ENCODE measurements at regions of chr19 and their contacts with region 1.

Region 1: DNA sequence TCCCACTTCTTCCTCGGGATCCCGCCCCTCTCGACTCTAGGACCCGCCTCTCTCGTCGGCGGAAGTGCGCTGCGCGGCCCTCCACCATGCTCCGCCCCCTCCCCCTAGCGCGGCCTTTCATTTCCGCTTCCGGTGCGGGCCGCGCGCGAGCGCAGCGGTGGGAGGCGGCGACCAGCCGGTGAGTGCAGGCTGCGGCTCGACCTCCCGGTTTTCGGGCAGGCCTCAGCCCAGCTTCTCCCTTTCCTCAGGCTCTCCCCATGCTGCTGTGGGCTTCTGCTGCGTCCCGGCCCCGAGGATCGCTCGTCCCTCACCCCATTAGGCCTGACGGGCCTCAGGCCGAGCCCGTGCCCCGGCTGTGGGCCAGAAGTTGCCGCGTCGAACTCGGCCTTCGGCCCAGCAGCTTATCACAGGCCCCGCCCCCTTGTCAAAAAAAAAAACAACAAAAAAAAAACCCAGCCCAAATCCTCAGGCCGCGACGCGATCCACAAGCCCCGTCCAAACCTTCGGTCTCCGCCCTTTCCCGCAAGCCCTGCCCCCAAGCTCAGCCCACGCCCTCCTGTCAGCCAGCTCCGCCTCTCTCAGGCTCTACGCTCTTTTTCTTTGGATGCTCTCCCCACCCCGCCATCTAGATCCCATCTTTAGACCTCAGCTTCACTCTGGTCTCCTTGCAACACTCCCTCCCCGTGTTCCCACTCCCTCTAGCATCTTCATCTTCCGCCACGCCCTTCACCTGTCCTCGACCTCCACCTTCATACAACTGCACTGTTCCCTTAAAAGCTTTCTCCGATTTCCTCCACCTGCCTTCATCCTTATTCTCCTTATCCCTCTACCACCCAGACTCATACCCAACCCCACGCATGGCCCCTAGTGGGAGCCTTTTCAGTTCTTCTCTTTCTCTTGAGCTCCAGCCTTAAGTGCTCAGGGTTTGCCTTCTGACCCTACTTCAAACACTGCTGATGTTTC is at the start of gene CLASRP:
- DNase-seq: peak; percentile 94

Region 2: DNA sequence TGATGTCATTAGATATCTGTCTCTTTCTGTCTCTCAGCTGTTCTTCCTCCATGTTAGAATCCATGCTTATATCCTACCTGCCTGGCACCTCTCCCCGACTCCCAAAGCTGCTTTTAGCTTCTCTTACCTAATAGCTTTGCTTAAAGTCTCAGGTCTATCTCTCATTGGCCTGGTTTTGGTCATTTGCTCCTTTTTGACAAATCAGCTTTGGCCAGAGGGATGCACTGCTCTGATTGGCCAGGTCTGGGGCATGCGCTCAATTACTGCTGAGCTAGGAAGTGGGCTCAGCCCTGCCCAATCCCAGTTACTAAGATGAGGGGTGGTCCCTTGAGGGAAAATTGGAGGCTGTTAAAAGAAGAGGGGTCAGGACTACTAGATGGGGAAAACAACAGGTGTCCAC is 11.8 kb before region 1 on chr19:
- CTCF ChIA-PET with region 1: no interaction called
- POLR2A ChIA-PET with region 1: interaction called, 34 read pairs
- DNase-seq: no peak

Region 3: DNA sequence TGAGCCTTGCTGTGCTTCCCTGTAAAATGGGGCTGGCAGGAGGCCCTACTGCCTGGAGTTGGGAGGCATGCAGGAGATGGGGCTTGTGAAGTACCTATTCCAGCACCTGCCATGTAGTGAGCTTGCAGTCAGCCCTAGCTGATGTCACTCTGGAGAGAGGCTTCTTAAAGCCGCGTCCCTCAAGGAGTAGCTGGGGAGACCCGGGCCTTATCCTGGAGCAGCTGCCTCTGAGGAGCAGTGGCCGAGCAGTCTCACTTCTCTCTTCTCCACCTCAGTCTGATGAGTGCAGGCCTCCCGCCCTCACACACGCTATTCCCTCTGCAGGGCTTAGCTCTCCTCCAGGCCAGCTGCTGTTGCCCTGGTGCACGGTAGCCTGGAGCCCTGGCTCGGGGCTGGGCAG is 17.6 kb after region 1 on chr19:
- CTCF ChIA-PET with region 1: interaction called, 4 read pairs
- POLR2A ChIA-PET with region 1: interaction called, 11 read pairs
- DNase-seq: no peak

Region 4: DNA sequence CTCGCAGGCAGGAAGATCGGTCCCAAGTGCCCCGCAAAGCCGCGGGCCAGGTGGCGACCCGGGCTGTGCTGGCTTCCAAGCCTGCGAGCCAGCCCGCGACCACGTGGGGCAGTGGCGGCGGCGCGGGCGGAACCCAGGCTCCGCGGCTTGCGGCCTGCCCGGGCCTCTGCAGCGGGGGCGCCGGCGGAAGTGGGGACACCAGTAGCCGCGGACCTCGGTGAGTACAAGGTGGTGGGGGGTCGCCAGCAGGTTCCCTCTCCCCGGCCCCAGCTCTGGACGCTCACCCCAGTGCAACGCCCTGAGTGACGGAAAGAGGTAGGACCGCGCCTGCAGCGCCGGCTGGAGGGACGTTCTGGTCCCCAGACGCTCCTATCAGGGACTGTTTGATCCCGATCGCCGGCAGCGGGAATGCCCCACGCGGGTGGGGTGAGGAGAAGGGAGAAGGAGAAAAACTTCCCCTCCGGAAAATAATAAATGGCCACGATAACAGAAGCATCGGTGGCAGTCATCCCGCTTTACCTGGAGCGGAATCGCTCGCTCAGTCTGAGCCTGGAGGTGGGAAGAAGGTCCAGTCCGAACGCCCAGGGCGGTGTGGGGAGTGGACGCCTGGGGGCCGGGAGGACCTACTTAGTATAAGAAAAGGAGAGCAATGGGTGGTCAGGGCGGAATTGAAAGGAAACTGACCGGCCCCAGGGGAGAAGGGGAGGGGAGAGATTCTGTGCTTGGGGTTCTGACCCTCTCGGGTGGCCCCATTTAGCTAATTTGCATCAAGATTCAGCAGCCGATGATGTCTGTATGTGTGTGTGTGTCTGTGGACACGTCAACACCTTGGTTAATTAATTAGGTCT is 40.1 kb after region 1 on chr19 and contains the start of gene GEMIN7:
- CTCF ChIA-PET with region 1: no interaction called
- POLR2A ChIA-PET with region 1: interaction called, 12 read pairs
- DNase-seq: peak; percentile 86